AG04449 (cell line): ENCODE measurements at regions of chr18 and their contacts with region 1.

Region 1: DNA sequence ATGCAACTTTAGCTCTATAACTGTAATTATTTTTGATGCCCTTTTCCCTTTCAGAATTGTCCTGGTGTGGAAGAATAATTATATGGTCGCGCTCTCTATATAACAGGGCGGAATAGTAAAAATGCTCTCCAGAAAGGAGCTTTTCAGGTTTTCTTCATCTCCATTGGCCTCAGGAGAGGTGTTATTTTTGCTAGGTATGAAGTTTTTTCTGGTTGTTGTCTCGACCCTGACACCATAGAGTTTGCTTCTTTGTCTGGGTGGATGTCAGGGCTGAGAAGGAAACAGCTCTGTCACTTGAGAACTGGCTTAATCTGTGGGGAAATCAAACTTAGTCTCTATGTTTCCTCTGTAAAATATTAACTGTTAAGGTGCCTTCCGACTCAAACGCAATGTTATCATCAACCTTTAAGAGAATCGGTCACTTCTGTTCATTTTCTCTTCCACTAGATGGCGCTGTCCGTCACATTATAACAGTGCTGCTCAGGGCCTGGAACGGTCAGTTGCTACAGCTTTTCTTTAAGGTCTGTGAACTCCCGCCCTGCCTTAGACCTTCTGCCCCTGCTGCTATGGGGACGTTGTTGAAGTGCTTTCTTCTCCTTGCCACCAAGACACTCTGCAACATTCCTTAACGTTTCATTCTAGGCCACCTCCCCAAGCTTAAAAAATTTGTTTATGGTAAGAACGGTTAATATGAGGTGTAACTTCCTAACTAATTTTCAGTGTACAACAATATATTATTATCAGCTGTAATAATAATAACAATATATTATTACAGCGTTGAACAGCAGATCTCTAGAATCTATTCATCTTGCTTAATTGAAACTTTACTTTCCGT is 23.8 kb upstream of the SERPINB12 start:
- DNase-seq: peak; percentile 36
- H3K4me3 ChIP-seq: no peak overlapping the region
- CTCF ChIP-seq: peak; percentile 59

Region 2: GRCh38 chr18:63528863-63529492 is 10.6 kb after region 1 on chr18:
- CTCF ChIA-PET with region 1: interaction called, 63 read pairs
- POLR2A ChIA-PET with region 1: no interaction called
- DNase-seq: no peak
- H3K4me3 ChIP-seq: no peak overlapping the region
- CTCF ChIP-seq: no peak

Region 3: DNA sequence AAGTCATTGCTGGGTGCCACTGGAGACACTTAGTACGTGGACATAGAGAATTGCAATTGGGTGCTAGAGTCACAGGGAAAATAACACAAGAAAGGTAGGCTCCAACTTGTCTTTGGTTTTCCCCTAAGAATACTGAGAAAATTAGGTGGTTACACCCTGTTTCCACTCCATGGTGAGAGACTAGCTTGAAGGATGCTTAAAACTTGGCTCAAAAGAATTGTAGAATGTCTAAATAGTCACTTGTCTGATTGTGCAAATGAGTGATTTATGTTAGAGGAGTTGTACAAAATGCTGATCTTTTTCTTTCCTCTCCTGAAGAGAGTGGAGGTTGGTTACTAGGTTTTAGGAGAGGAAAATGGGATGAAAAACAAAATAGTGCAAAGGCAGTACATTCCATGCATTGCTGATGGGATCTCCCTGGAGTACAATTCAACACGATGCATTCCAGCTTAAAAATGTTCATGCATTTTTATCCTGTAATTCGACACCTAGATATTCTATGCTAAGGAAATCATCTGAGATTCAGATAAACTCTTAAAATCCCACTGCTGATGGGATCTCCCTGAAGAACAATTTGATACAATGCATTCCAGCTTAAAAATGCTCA is 21.6 kb after region 1 on chr18:
- CTCF ChIA-PET with region 1: interaction called, 41 read pairs
- POLR2A ChIA-PET with region 1: interaction called, 3 read pairs
- DNase-seq: peak; percentile 59
- H3K4me3 ChIP-seq: no peak overlapping the region
- CTCF ChIP-seq: no peak

Region 4: GRCh38 chr18:63562284-63562683 is 43.9 kb after region 1 on chr18:
- CTCF ChIA-PET with region 1: interaction called, 12 read pairs
- POLR2A ChIA-PET with region 1: no interaction called
- DNase-seq: no peak
- H3K4me3 ChIP-seq: no peak overlapping the region
- CTCF ChIP-seq: no peak

Region 5: GRCh38 chr18:63578357-63578958 is 60.1 kb after region 1 on chr18:
- CTCF ChIA-PET with region 1: interaction called, 724 read pairs
- POLR2A ChIA-PET with region 1: no interaction called
- DNase-seq: no peak
- H3K4me3 ChIP-seq: no peak overlapping the region
- CTCF ChIP-seq: peak; percentile 73

Region 6: GRCh38 chr18:63603772-63604171 is 85.4 kb after region 1 on chr18:
- CTCF ChIA-PET with region 1: interaction called, 10 read pairs
- POLR2A ChIA-PET with region 1: no interaction called
- DNase-seq: peak; percentile 21
- H3K4me3 ChIP-seq: no peak overlapping the region
- CTCF ChIP-seq: no peak

Region 7: GRCh38 chr18:63936156-63936931 is 417.9 kb after region 1 on chr18:
- CTCF ChIA-PET with region 1: interaction called, 33 read pairs
- POLR2A ChIA-PET with region 1: no interaction called
- DNase-seq: no peak
- H3K4me3 ChIP-seq: peak overlapping the region; percentile 70
- CTCF ChIP-seq: peak; percentile 84